ENCODE measurements at regions of chrX and their contacts with region 1.

Region 1: GRCh38 chrX:83416273-83416672 is 91.8 kb upstream of the POU3F4 start:
- DNase-seq: peak; percentile 51
- H3K4me3 Mint-ChIP-seq: no peak overlapping the region
- H3K27ac Mint-ChIP-seq: no peak overlapping the region
- H3K4me1 Mint-ChIP-seq: no peaks in the 10 kb centered on the region
- H3K27me3 Mint-ChIP-seq: no peaks in the 10 kb centered on the region
- CTCF ChIP-seq: peak; percentile 52

Region 2: GRCh38 chrX:82218361-82218760 is 1197.9 kb before region 1 on chrX:
- CTCF ChIA-PET with region 1: interaction called, 6 read pairs
- POLR2A ChIA-PET with region 1: no interaction called
- intact Hi-C with region 1: loop called (anchors 1 kb)
- DNase-seq: peak; percentile 61
- H3K4me3 Mint-ChIP-seq: no peak overlapping the region
- H3K27ac Mint-ChIP-seq: no peak overlapping the region
- H3K4me1 Mint-ChIP-seq: peaks cover 11% of the 10 kb centered on the region
- H3K27me3 Mint-ChIP-seq: peaks cover 18% of the 10 kb centered on the region
- CTCF ChIP-seq: peak; percentile 60

Region 3: DNA sequence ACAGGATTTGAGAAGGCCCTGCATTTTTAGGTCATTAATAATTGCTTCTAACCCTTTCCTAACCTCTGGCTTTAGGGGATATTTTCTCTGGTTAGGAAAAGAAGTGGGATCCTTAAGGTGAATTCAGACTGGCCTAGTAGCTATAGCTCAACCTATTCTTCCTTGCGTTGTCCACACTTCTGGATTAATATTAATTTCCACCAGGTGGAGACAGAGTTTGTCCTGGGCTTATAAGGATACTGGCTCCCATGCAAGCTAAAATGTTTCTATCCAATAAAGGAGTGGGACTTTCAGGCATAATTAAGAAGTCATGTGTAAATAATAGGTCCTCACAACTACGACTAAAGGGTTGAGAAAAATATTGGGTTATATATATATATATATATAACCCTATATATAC is 768.2 kb before region 1 on chrX:
- CTCF ChIA-PET with region 1: interaction called, 3 read pairs
- POLR2A ChIA-PET with region 1: no interaction called
- intact Hi-C with region 1: loop called (anchors 1 kb)
- DNase-seq: peak; percentile 27
- H3K4me3 Mint-ChIP-seq: no peak overlapping the region
- H3K27ac Mint-ChIP-seq: no peak overlapping the region
- H3K4me1 Mint-ChIP-seq: no peaks in the 10 kb centered on the region
- H3K27me3 Mint-ChIP-seq: no peaks in the 10 kb centered on the region
- CTCF ChIP-seq: no peak

Region 4: GRCh38 chrX:82961129-82961528 is 455.1 kb before region 1 on chrX:
- CTCF ChIA-PET with region 1: no interaction called
- POLR2A ChIA-PET with region 1: no interaction called
- intact Hi-C with region 1: loop called (anchors 1 kb)
- DNase-seq: peak; percentile 19
- H3K4me3 Mint-ChIP-seq: no peak overlapping the region
- H3K27ac Mint-ChIP-seq: no peak overlapping the region
- H3K4me1 Mint-ChIP-seq: no peaks in the 10 kb centered on the region
- H3K27me3 Mint-ChIP-seq: no peaks in the 10 kb centered on the region
- CTCF ChIP-seq: no peak

Region 5: DNA sequence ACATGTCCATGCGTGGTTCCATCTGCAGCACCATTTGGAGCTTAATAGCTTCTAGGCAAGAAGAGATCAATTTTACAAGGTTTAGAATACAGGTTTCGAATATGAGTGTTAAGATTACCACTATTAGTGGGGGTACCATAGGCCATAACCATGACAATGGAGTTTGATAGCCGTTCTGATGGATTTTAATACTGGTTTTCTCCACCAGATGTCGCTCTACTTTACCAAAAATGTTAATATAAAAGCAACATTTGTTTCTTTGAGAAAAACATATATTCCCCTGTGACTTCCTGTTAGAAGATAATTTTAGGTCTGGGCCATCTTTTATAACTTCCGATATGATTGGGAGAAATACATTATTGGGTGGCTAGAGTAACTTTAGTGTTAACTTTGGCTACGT is 407.9 kb before region 1 on chrX:
- CTCF ChIA-PET with region 1: interaction called, 10 read pairs
- POLR2A ChIA-PET with region 1: no interaction called
- intact Hi-C with region 1: loop called (anchors 2 kb)
- DNase-seq: peak; percentile 34
- H3K4me3 Mint-ChIP-seq: no peak overlapping the region
- H3K27ac Mint-ChIP-seq: no peak overlapping the region
- H3K4me1 Mint-ChIP-seq: no peaks in the 10 kb centered on the region
- H3K27me3 Mint-ChIP-seq: no peaks in the 10 kb centered on the region
- CTCF ChIP-seq: peak; percentile 54

Region 6: GRCh38 chrX:83446355-83446754 is 30.1 kb after region 1 on chrX:
- CTCF ChIA-PET with region 1: no interaction called
- POLR2A ChIA-PET with region 1: no interaction called
- intact Hi-C with region 1: no loop called
- DNase-seq: no peak
- H3K4me3 Mint-ChIP-seq: no peak overlapping the region
- H3K27ac Mint-ChIP-seq: no peak overlapping the region
- H3K4me1 Mint-ChIP-seq: no peaks in the 10 kb centered on the region
- H3K27me3 Mint-ChIP-seq: no peaks in the 10 kb centered on the region
- CTCF ChIP-seq: no peak

Measured in MCF 10A (cell line).